ENCODE measurements at regions of chr14 and their contacts with region 1.

Region 1: GRCh38 chr14:102819176-102819628 is 42.0 kb downstream of the TRAF3 start:
- DNase-seq: no peak
- ATAC-seq: peak; percentile 73
- H3K4me3 Mint-ChIP-seq: peak overlapping the region; percentile 68
- H3K27ac Mint-ChIP-seq: peak overlapping the region; percentile 85
- H3K4me1 Mint-ChIP-seq: peaks cover 83% of the 10 kb centered on the region
- H3K27me3 Mint-ChIP-seq: no peaks in the 10 kb centered on the region
- CTCF ChIP-seq: no peak

Region 2: DNA sequence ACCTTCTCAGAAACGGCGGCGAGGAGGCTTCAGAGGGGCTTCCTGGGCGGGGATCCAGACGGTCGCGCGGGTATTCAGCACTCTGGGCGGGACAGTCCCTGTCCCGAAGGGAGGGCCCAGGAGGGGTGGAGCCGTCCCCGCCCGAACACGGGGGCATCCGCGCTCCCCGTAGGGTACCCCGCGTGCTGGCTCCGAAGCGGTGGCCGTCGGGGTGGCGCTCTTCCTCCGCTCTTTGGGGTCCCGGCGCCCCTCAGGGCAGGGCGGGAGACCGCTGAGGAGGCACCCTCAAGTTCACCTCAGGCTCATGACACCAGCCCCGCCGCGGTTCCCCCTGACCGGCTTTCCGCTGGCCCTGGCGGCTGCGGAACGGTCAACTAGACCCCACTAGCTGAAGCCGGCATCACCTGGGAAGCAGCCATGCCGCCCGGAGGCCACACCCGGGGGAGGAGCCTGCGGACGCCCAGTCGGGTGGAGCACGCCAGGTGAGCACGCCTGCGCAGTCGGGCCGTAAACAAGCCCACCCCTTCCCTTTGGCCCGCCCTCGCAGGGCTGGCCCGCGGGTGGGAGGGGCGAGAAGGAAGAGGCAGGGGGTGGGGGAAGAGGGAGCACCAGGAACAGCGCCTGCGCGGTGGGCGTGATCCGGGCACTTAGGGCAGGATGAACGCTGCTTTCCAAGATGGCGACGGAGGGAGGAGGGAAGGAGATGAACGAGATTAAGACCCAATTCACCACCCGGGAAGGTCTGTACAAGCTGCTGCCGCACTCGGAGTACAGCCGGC is 679.8 kb before region 1 on chr14 and contains the start of gene WDR20:
- CTCF ChIA-PET with region 1: no interaction called
- POLR2A ChIA-PET with region 1: no interaction called
- intact Hi-C with region 1: no loop called
- DNase-seq: peak; percentile 99
- ATAC-seq: peak; percentile 94
- H3K4me3 Mint-ChIP-seq: peak within 1 kb of the TSS; percentile 97
- H3K27ac Mint-ChIP-seq: peak within 1 kb of the TSS; percentile 93
- H3K4me1 Mint-ChIP-seq: peaks cover 19% of the 10 kb centered on the region
- H3K27me3 Mint-ChIP-seq: no peaks in the 10 kb centered on the region
- CTCF ChIP-seq: no peak
- total RNA-seq, gene WDR20: 41.1 and 42.3 TPM in 2 replicates

Region 3: DNA sequence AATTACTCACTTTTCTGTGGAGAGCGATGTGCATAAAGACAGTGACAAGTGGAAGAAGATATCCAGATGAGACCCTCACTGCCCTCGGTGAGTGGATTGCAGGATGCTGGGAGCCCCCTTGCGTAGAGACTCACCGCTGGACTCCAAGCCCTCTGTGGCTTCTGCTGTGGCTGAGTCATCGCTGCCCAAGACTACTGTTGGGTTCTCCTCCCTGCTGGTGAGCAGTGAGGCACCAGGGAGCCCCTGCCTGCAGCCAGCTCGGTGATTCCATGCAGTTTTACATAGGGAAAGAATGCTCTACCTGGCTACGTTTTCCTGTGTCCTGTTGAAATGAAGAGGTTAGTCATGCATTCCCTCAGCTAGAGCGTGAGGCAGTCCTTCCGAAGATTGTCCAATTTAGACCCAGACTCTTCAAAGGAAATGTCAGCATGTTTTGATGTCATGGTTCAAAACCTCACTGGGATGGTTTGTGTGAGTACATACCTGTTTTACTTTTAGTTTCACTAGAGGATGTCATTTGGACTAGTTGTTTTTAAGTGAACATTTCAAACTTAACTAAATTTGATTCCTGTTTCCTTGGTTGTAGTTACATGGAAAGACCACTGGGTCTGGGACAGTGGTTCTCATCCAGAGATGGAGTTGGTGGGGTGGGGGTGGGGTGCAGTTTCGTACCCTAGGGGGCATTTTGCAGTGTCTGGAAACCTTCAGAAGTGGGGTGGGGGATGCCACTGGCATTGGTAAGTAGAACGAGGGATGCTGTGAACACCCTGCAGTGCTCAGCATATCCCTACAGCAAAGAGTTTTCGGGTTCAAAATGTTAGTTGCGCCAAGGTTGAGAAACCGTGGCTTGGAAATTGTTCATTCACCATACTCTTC is 13.6 kb before region 1 on chr14:
- CTCF ChIA-PET with region 1: no interaction called
- POLR2A ChIA-PET with region 1: interaction called, 4 read pairs
- intact Hi-C with region 1: loop called (anchors 1 kb)
- DNase-seq: peak; percentile 30
- ATAC-seq: peak; percentile 51
- H3K4me3 Mint-ChIP-seq: peak overlapping the region; percentile 74
- H3K27ac Mint-ChIP-seq: peak overlapping the region; percentile 83
- H3K4me1 Mint-ChIP-seq: peaks cover 79% of the 10 kb centered on the region
- H3K27me3 Mint-ChIP-seq: no peaks in the 10 kb centered on the region
- CTCF ChIP-seq: no peak

Region 4: GRCh38 chr14:102838530-102838929 is 19.3 kb after region 1 on chr14:
- CTCF ChIA-PET with region 1: no interaction called
- POLR2A ChIA-PET with region 1: interaction called, 10 read pairs
- intact Hi-C with region 1: no loop called
- DNase-seq: no peak
- ATAC-seq: no peak
- H3K4me3 Mint-ChIP-seq: no peak overlapping the region
- H3K27ac Mint-ChIP-seq: no peak overlapping the region
- H3K4me1 Mint-ChIP-seq: peaks cover 13% of the 10 kb centered on the region
- H3K27me3 Mint-ChIP-seq: no peaks in the 10 kb centered on the region
- CTCF ChIP-seq: no peak

Measured in activated B cell treated with CpG ODN at 0.5 μM for 24 hours (primary cell).